Activated B cell treated with CpG ODN at 0.5 μM for 24 hours (primary cell): ENCODE measurements at regions of chr1 and their contacts with region 1.

Region 1: GRCh38 chr1:20174937-20175666 is 10.8 kb upstream of the UBXN10 start:
- DNase-seq: no peak
- ATAC-seq: no peak
- H3K4me3 Mint-ChIP-seq: no peak overlapping the region
- H3K27ac Mint-ChIP-seq: no peak overlapping the region
- H3K4me1 Mint-ChIP-seq: peaks cover 22% of the 10 kb centered on the region
- H3K27me3 Mint-ChIP-seq: peaks cover 6% of the 10 kb centered on the region
- CTCF ChIP-seq: no peak

Region 2: DNA sequence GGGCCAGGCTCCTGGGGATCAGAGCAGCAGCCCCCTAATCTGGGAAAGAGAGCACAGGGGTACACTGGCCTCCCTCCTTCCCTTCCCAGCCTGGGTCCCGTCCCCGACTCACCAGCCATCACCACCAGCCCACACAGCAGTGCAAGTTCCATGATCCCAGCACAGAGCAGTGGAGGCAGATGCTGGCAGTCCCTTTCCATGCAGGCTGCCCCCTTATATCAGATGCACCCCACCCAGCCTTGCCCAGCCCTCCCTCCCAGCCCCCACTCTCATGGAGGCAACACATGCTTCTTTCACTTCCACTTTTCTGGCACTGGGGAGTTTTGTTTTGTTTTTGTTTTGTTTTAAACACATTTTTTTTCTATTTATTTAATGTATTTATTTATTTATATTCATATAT is 55.8 kb before region 1 on chr1 and contains the start of gene PLA2G2D:
- CTCF ChIA-PET with region 1: no interaction called
- POLR2A ChIA-PET with region 1: interaction called, 16 read pairs
- intact Hi-C with region 1: no loop called
- DNase-seq: no peak
- ATAC-seq: no peak
- H3K4me3 Mint-ChIP-seq: peak within 1 kb of the TSS; percentile 60
- H3K27ac Mint-ChIP-seq: peak within 1 kb of the TSS; percentile 84
- H3K4me1 Mint-ChIP-seq: peaks cover 63% of the 10 kb centered on the region
- H3K27me3 Mint-ChIP-seq: no peaks in the 10 kb centered on the region
- CTCF ChIP-seq: no peak
- total RNA-seq, gene PLA2G2D: 0.16 and 0.29 TPM in 2 replicates

Region 3: DNA sequence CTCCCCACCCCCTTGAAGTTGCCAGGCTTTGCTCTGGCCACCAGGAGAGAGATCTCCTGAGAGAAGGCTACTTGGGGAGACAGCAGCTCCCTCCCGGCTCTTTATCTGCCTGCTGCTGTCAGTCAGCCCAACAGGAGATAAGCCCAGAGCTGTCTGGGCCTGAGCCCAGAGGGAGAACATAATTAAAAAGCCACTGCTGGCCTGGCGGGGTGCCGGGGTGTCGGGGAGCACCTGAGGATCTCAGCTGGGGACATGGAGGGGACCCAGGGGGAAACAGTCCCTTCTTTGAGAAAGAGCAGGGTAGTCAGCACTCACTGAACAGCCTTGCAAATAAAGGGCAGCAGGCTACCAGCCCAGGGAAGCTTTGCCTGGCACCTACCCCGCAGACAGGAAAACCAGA is 133.5 kb after region 1 on chr1:
- CTCF ChIA-PET with region 1: no interaction called
- POLR2A ChIA-PET with region 1: no interaction called
- intact Hi-C with region 1: no loop called
- DNase-seq: no peak
- ATAC-seq: no peak
- H3K4me3 Mint-ChIP-seq: no peak overlapping the region
- H3K27ac Mint-ChIP-seq: no peak overlapping the region
- H3K4me1 Mint-ChIP-seq: no peaks in the 10 kb centered on the region
- H3K27me3 Mint-ChIP-seq: peaks cover 7% of the 10 kb centered on the region
- CTCF ChIP-seq: no peak